Caco-2 (cell line): ENCODE measurements at regions of chr19 and their contacts with region 1.

Region 1: DNA sequence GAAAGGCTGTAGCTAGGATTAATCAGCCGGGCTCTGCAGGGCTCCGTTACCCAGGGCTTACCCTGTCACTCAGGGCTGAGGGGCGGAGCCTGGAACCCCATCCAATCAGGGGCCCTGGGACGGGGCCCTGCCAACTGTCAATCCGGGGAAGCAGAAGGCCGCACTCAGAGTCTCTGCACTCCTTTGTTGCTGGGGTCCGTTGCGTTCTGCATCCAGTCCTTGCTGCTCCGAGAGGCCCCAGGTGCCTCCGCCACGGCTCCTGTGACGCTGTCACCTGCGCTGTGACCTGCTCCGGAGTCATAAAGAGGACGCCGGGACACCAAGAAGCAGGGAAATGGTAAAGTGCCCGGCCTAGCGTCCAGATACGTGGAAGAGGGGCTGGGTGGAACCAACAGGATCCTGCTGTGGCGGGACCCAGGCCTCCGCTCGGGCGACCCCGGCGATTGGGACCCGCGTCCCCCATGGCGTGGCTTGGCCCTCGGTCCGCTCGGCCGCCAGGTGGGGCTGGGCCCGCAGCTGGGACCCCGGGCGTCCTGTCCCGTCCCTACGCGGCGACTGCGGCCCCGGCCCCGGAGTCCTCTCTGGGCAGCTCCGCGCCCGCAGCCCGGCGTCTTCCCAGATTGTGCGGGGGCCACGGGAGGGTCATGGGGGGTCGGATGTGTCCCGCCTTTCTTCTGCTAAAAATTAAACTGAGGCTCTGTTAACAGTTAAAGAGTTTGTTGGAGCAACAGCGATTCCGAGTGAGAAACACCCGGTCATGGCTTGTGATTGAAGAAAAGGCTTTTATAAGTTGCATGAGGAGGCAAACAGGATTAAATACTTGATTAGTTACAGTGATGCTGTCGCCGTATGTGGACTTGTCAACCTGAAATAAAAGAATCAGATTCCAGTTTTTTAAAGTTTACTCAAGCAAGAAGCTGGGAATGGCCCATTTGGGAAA is at the start of gene ZNF491:
- DNase-seq: peak; percentile 87 to 89
- H3K4me3 ChIP-seq: peak within 1 kb of the TSS; percentile 70
- H3K4me3 Mint-ChIP-seq: peak within 1 kb of the TSS; percentile 82
- H3K27ac Mint-ChIP-seq: no peak within 1 kb of the TSS
- H3K4me1 ChIP-seq: peaks cover 8% of the 10 kb centered on the region; the same call in 1 of the 2 replicates
- H3K4me1 Mint-ChIP-seq: peaks cover 10% of the 10 kb centered on the region
- H3K27me3 ChIP-seq: no peaks in the 10 kb centered on the region
- H3K27me3 Mint-ChIP-seq: no peaks in the 10 kb centered on the region
- CTCF ChIP-seq: peak; percentile 41 to 49
- total RNA-seq, gene ZNF491: 0.20 and 0.56 TPM in 2 replicates

Region 2: DNA sequence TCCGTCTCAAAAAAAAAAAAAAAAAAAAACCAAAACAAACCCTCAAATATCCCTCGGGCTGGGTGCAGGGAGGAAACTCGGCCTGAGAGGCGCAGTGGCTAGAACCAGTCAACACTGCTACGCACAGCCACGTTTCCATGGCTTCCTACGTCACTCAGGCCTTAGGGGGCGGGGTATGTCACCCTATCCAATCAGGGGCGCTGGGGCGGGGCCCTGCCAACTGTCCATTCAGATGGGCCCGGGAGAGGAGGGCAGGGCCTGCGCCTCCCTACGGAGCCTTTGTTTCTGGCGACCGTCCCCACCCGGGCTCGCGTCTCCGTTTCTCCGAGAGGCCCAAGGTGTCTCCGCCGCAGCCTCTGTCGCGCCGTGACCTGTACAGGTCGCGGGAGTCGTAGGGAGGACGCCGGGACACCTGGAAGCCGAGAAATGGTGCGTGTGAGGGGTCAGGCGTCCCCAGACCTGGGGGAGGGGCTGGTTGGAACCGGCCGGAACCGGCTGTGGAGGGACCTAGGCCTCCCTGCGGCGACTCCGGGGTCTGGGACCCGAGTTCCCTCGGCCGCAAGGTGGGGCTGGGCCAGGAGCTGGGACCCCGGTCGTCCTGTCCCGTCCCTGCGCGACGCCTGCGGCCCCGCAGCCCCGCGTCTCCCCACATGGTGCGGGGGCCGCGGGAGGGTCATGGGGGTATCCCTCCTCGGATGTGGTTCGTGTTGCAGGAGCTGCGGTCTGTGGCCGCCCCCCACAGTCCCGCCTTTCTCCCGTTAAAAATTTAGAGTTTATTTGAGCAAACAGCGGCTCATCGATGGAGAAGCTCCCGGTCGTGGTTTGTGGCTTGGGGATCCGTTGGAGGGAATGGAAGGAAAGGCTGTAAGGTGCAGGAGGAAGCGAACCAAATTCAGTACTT is 201.2 kb before region 1 on chr19 and contains the start of gene ZNF627:
- CTCF ChIA-PET with region 1: no interaction called
- POLR2A ChIA-PET with region 1: no interaction called
- intact Hi-C with region 1: no loop called
- DNase-seq: peak; percentile 98
- H3K4me3 ChIP-seq: peak within 1 kb of the TSS; percentile 54
- H3K4me3 Mint-ChIP-seq: peak within 1 kb of the TSS; percentile 90
- H3K27ac Mint-ChIP-seq: peak within 1 kb of the TSS; percentile 94
- H3K4me1 ChIP-seq: 0 out of 2 replicates have a peak, but pooled peaks cover 3% of the 10 kb centered on the region
- H3K4me1 Mint-ChIP-seq: peaks cover 5% of the 10 kb centered on the region
- H3K27me3 ChIP-seq: no peaks in the 10 kb centered on the region
- H3K27me3 Mint-ChIP-seq: no peaks in the 10 kb centered on the region
- CTCF ChIP-seq: no peak
- total RNA-seq, gene ZNF627: 8.1 and 9.0 TPM in 2 replicates

Region 3: GRCh38 chr19:11738746-11739620 is 59.7 kb before region 1 on chr19 and contains the start of gene ZNF823:
- CTCF ChIA-PET with region 1: interaction called, 3 read pairs
- POLR2A ChIA-PET with region 1: no interaction called
- intact Hi-C with region 1: loop called (anchors 5 kb)
- DNase-seq: peak; percentile 99
- H3K4me3 ChIP-seq: peak within 1 kb of the TSS; percentile 75
- H3K4me3 Mint-ChIP-seq: peak within 1 kb of the TSS; percentile 100
- H3K27ac Mint-ChIP-seq: peak within 1 kb of the TSS; percentile 99
- H3K4me1 ChIP-seq: peaks cover 9% of the 10 kb centered on the region
- H3K4me1 Mint-ChIP-seq: peaks cover 5% of the 10 kb centered on the region
- H3K27me3 ChIP-seq: no peaks in the 10 kb centered on the region
- H3K27me3 Mint-ChIP-seq: no peaks in the 10 kb centered on the region
- CTCF ChIP-seq: no peak
- total RNA-seq, gene ZNF823: 11.9 and 12.1 TPM in 2 replicates

Region 4: GRCh38 chr19:11887611-11888531 is 89.2 kb after region 1 on chr19 and contains the start of gene ZNF69:
- CTCF ChIA-PET with region 1: interaction called, 6 read pairs
- POLR2A ChIA-PET with region 1: interaction called, 3 read pairs
- intact Hi-C with region 1: loop called (anchors 2 kb)
- DNase-seq: peak; percentile 85 to 89
- H3K4me3 ChIP-seq: peak within 1 kb of the TSS; percentile 43
- H3K4me3 Mint-ChIP-seq: peak within 1 kb of the TSS; percentile 90
- H3K27ac Mint-ChIP-seq: peak within 1 kb of the TSS; percentile 98
- H3K4me1 ChIP-seq: no peaks in the 10 kb centered on the region; the same call in 1 of the 2 replicates
- H3K4me1 Mint-ChIP-seq: peaks cover 7% of the 10 kb centered on the region
- H3K27me3 ChIP-seq: no peaks in the 10 kb centered on the region
- H3K27me3 Mint-ChIP-seq: no peaks in the 10 kb centered on the region
- CTCF ChIP-seq: no peak
- total RNA-seq, gene ZNF69: 6.4 and 7.5 TPM in 2 replicates

Region 5: DNA sequence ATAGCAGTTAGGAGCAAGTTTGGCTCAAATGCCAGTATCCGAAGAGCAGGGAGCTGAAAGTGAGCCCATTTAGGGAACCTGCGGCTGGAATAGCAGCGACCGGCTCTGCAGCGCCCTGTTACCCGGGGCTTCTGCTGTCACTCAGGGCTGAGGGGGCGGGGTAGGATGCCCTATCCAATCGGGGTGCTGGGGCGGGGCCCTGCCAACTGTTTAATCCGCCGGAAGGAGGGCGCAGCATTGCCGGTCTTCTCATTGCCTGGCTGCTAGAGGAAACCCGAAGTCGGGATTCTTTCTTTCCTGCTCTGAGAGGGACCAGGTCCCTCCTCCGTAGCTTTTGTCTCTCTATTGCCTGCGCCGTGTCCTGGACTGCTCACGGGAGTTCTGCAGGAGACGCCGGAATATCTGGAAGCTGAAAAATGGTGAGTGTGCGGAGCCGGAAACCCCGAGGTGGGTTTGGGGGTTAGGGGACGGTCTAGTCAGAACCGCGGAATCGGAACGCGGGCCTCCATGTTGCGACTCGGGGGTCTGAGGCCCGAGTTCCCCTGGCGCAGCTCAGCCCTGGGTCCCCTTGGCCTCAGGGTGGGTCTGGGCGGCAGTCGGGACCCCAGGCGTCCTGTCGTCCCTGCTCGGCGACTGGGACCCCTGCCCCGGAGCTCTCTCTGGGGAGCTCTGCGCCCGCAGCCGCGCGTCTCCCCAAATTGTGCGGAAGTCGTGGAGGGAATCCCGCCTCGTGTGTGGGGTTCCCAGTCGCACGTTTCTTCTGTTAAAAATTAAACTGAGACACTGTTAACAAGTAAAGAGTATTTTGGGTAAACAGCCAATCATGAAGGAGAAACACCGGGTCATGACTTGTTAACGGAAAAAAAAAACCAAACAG is 189.0 kb after region 1 on chr19:
- CTCF ChIA-PET with region 1: interaction called, 29 read pairs
- POLR2A ChIA-PET with region 1: interaction called, 3 read pairs
- intact Hi-C with region 1: loop called (anchors 1 kb)
- DNase-seq: peak; percentile 81 to 92
- H3K4me3 ChIP-seq: peak overlapping the region; percentile 71
- H3K4me3 Mint-ChIP-seq: peak overlapping the region; percentile 91
- H3K27ac Mint-ChIP-seq: peak overlapping the region; percentile 65
- H3K4me1 ChIP-seq: no peaks in the 10 kb centered on the region
- H3K4me1 Mint-ChIP-seq: peaks cover 8% of the 10 kb centered on the region
- H3K27me3 ChIP-seq: no peaks in the 10 kb centered on the region
- H3K27me3 Mint-ChIP-seq: no peaks in the 10 kb centered on the region
- CTCF ChIP-seq: no peak